Caco-2 (cell line): ENCODE measurements at regions of chr1 and their contacts with region 1.

Region 1: DNA sequence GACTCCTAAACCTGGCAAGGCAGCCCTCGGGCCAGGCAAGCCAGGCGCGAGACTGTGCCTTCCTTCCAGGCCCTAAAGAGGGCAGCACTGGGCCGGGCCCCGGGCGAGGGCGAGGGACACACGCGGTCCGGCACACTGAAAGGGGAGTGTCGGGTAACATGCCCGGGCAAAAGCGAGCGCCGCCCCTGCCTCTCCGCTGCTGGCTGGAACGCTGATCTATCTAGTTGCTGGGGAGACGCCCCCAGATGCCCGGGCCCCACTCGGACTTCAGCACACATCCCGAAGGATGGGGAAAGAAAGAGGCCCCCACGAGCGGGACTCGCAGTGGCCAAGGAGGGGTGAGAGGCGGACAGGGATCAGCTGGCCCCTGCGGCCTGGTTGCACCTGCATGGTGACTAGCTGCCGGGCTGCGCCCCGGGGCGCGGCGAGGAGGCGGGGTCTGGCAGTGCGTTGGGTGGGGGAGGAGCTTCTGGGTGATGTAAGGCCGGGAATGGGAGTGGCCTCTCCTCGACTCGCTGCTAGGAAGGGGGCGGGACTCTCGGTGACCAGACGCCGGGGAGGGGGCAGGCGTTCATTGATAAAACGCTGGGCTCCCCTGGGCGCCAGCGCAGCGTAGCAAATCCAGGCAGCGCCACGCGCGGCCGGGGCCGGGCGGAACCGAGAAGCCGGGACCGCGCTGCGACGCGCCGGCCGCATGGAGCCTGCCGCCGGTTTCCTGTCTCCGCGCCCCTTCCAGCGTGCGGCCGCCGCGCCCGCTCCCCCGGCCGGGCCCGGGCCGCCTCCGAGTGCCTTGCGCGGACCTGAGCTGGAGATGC is at the start of gene PLK3:
- DNase-seq: peak; percentile 97
- H3K4me3 ChIP-seq: peak within 1 kb of the TSS; percentile 77
- H3K4me3 Mint-ChIP-seq: peak within 1 kb of the TSS; percentile 97
- H3K27ac Mint-ChIP-seq: peak within 1 kb of the TSS; percentile 99
- H3K4me1 ChIP-seq: no peaks in the 10 kb centered on the region
- H3K4me1 Mint-ChIP-seq: peaks cover 8% of the 10 kb centered on the region
- H3K27me3 ChIP-seq: no peaks in the 10 kb centered on the region
- H3K27me3 Mint-ChIP-seq: no peaks in the 10 kb centered on the region
- CTCF ChIP-seq: peak; percentile 72 to 89
- total RNA-seq, gene PLK3: 3.2 and 5.2 TPM in 2 replicates

Region 2: DNA sequence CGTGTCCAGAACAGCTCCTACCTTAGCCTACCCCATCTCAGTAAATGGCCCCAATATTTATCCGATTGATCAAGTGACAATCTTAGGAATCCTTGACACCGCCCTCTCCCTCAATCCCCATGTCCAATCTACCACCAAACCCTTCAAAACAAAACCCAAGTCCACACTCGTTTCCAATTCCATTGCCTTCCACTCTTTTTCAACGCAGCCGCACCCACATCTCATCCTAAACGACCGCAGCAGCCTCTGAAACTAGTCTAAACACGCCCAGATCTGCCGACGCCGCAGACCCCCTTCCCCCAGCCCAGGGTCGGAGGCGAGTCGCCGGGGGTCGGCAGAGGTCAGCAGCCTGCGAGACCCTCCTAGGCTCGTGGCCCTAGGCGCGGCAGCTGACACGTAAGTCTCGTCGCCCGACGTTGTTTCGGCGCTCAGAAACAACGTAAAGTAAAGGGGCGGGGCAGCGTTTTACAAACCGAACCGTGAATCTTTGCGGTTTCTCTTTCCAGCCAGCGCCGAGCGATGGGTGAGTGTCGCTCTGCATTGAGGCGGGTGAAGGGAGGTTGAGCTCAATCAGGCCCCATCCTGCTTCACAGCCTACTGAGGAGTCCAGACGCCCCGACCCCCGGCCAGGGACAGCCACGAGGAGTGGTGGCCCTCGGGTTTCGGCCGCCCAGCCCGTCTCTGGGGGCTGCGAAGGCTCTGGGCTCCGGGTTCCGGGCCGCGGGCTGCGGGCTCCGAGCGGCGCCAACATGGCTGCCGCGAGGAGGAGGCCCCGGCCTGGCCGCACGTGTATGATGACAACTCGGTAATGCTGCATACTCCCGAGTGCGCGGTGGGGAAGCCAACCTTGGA is 24.7 kb before region 1 on chr1 and contains the start of gene RPS8:
- CTCF ChIA-PET with region 1: interaction called, 5 read pairs
- POLR2A ChIA-PET with region 1: interaction called, 20 read pairs
- intact Hi-C with region 1: no loop called
- DNase-seq: peak; percentile 89 to 90
- H3K4me3 ChIP-seq: peak within 1 kb of the TSS; percentile 71
- H3K4me3 Mint-ChIP-seq: peak within 1 kb of the TSS; percentile 81
- H3K27ac Mint-ChIP-seq: peak within 1 kb of the TSS; percentile 97
- H3K4me1 ChIP-seq: peaks cover 6% of the 10 kb centered on the region
- H3K4me1 Mint-ChIP-seq: no peaks in the 10 kb centered on the region
- H3K27me3 ChIP-seq: no peaks in the 10 kb centered on the region
- H3K27me3 Mint-ChIP-seq: no peaks in the 10 kb centered on the region
- CTCF ChIP-seq: no peak
- total RNA-seq, gene RPS8: 1,451 and 1,467 TPM in 2 replicates

Region 3: DNA sequence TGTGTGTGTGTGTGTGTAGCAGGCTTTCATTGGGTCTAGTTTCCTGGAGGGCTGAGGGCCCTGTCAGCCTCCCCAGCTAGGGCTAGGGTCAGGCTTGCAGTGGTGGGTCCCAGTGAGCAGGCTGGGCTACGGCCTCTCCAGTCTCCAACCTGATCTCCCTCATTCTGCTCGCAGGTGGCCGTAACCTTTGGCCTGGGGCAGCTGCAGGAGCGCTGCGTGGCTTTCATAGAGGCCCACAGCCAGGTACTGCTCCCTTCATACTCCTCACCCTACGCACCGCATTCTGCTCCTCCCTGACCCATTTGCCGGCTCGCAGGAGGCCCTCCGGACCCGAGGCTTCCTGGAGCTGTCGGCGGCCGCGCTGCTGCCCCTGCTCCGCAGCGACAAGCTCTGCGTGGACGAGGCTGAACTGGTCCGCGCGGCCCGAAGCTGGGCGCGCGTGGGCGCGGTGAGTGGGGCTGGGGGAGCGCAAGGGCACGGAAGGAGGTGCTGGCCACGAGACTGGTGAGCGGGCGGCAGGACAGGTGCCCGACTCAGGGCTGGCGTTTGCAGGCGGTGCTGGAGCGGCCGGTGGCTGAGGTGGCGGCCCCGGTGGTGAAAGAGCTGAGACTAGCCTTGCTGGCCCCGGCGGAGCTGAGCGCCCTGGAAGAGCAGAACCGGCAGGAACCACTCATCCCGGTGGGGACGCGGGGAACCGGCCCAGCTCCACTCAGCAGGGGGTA is 13.0 kb after region 1 on chr1:
- CTCF ChIA-PET with region 1: interaction called, 13 read pairs
- POLR2A ChIA-PET with region 1: interaction called, 25 read pairs
- intact Hi-C with region 1: loop called (anchors 2 kb)
- DNase-seq: no peak
- H3K4me3 ChIP-seq: peak overlapping the region; percentile 57
- H3K4me3 Mint-ChIP-seq: peak overlapping the region; percentile 74
- H3K27ac Mint-ChIP-seq: peak overlapping the region; percentile 9
- H3K4me1 ChIP-seq: peaks cover 32% of the 10 kb centered on the region
- H3K4me1 Mint-ChIP-seq: peaks cover 17% of the 10 kb centered on the region
- H3K27me3 ChIP-seq: no peaks in the 10 kb centered on the region
- H3K27me3 Mint-ChIP-seq: no peaks in the 10 kb centered on the region
- CTCF ChIP-seq: no peak

Region 4: GRCh38 chr1:44842862-44843655 is 43.1 kb after region 1 on chr1 and contains the start of gene PTCH2:
- CTCF ChIA-PET with region 1: no interaction called
- POLR2A ChIA-PET with region 1: no interaction called
- intact Hi-C with region 1: no loop called
- DNase-seq: peak; percentile 62 to 66
- H3K4me3 ChIP-seq: peak within 1 kb of the TSS; percentile 48
- H3K4me3 Mint-ChIP-seq: peak within 1 kb of the TSS; percentile 71
- H3K27ac Mint-ChIP-seq: no peak within 1 kb of the TSS
- H3K4me1 ChIP-seq: no peaks in the 10 kb centered on the region
- H3K4me1 Mint-ChIP-seq: no peaks in the 10 kb centered on the region
- H3K27me3 ChIP-seq: no peaks in the 10 kb centered on the region
- H3K27me3 Mint-ChIP-seq: no peaks in the 10 kb centered on the region
- CTCF ChIP-seq: no peak
- total RNA-seq, gene PTCH2: 0.44 and 0.48 TPM in 2 replicates